Ovary (tissue), 10 donors: ENCODE measurements at regions of chr11 and their contacts with region 1.

Region 1: GRCh38 chr11:100863080-100863581 is 176.0 kb downstream of the ARHGAP42 start:
- DNase-seq: no peak
- H3K4me3 ChIP-seq: no peak overlapping the region
- H3K27ac ChIP-seq: no peak overlapping the region
- H3K4me1 ChIP-seq: peaks cover 2% of the 10 kb centered on the region
- H3K27me3 ChIP-seq: no peaks in the 10 kb centered on the region
- CTCF ChIP-seq: no peak
- EP300 ChIP-seq: no peak
- POLR2A ChIP-seq: no peak

Region 2: DNA sequence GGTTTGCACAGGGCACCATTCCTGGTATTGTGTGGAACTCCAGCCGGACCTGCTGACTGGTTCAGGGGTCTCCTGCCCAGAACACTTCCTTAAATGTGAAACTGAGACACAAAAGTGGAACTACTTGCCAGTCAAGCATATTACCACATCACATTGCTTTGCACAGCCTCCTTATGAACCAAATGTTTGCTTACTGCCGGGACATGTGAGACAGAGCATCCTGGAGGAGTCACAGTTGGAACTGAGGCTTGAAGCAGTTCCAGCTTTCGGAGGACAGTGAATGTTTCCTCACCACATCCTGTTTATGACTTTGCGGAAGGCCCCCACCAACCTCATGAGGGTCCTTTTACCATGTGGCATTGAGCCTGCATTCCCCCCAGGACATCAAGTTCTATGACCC is 281.8 kb before region 1 on chr11:
- intact Hi-C with region 1: loop called in 3 of 4 experiments (anchors 10 kb)
- DNase-seq: no peak
- H3K4me3 ChIP-seq: no peak overlapping the region
- H3K27ac ChIP-seq: no peak overlapping the region
- H3K4me1 ChIP-seq: no peaks in the 10 kb centered on the region
- H3K27me3 ChIP-seq: no peaks in the 10 kb centered on the region
- CTCF ChIP-seq: no peak
- EP300 ChIP-seq: no peak
- POLR2A ChIP-seq: no peak

Region 3: GRCh38 chr11:100681064-100681502 is 182.0 kb before region 1 on chr11:
- intact Hi-C with region 1: loop called in 2 of 4 experiments (anchors 5 kb)
- DNase-seq: no peak
- H3K4me3 ChIP-seq: no peak overlapping the region
- H3K27ac ChIP-seq: no peak overlapping the region
- H3K4me1 ChIP-seq: no peaks in the 10 kb centered on the region
- H3K27me3 ChIP-seq: no peaks in the 10 kb centered on the region
- CTCF ChIP-seq: no peak
- EP300 ChIP-seq: no peak
- POLR2A ChIP-seq: no peak

Region 4: GRCh38 chr11:100789500-100789899 is 73.6 kb before region 1 on chr11:
- intact Hi-C with region 1: no loop called
- DNase-seq: no peak
- H3K4me3 ChIP-seq: no peak overlapping the region
- H3K27ac ChIP-seq: no peak overlapping the region
- H3K4me1 ChIP-seq: peaks cover 3% of the 10 kb centered on the region
- H3K27me3 ChIP-seq: no peaks in the 10 kb centered on the region
- CTCF ChIP-seq: no peak
- EP300 ChIP-seq: no peak
- POLR2A ChIP-seq: no peak

Region 5: GRCh38 chr11:100800202-100800601 is 62.9 kb before region 1 on chr11:
- intact Hi-C with region 1: no loop called
- DNase-seq: no peak
- H3K4me3 ChIP-seq: no peak overlapping the region
- H3K27ac ChIP-seq: no peak overlapping the region
- H3K4me1 ChIP-seq: no peaks in the 10 kb centered on the region
- H3K27me3 ChIP-seq: no peaks in the 10 kb centered on the region
- CTCF ChIP-seq: no peak
- EP300 ChIP-seq: no peak
- POLR2A ChIP-seq: no peak

Region 6: DNA sequence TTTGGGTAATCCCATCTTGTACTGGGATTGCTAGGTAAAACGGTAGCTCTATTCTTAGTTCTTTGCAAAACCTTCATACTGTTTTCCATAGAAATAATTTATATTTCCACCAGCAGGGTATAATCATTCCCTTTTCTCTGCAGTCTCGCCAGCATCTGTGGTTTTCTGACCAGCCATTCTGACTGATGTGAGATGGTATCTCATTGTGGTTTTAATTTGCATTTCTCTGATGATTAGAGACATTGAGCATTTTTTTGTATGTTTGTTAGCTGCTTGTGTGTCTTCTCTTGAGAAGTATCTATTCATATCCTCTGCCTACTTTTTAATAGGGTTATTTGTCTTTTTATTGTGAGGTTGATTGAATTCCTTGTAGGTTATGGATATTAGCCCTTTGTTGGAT is 45.6 kb after region 1 on chr11:
- intact Hi-C with region 1: no loop called
- DNase-seq: no peak
- H3K4me3 ChIP-seq: no peak overlapping the region
- H3K27ac ChIP-seq: no peak overlapping the region
- H3K4me1 ChIP-seq: no peaks in the 10 kb centered on the region
- H3K27me3 ChIP-seq: no peaks in the 10 kb centered on the region
- CTCF ChIP-seq: no peak
- EP300 ChIP-seq: no peak
- POLR2A ChIP-seq: no peak